Ovary (tissue), 10 donors: ENCODE measurements at regions of chr2 and their contacts with region 1.

Region 1: DNA sequence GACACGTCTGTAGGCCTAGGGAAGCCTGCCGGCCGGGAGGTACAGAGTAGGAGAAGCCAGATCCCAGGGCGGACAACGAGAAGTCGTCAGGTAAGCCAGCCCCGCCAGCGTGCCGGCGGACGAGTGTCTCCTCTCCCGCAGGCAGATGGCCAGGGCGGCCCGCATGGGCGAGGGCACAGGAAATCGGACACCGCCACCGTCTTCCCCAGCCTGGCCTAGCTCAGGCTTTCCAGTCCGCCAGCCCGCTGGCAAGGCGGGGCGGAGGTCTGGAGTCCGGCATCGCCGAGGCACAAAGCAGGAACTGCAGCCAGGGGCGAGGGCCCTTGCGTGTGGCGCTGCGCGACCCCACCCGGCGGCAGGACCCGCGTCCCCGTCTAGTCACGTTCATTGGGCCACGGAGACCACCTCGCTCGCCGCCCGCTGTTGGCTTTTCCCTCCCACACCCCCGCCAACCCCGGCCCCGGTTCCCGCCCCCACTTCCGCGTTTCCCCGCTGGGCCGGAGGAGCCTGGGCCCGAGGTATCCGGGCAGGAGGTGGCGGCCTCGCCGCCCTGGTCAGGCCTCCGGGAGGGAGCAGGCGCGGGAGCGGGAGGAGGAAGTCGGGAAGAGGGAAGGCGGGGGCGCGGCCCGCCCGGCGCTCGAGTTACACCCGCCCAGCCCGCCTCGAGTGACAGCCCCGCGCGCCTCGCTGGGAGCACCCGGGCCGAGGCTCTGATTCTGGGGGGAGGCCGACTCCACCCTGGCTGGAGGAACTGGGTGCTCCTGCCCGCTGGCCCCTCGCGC is at the start of gene GPD2:
- DNase-seq: peak; percentile 91 to 95 (median 92)
- H3K4me3 ChIP-seq: peak within 1 kb of the TSS; percentile 84
- H3K27ac ChIP-seq: peak within 1 kb of the TSS; percentile 93 to 98
- H3K4me1 ChIP-seq: peaks cover 7% of the 10 kb centered on the region
- H3K27me3 ChIP-seq: no peaks in the 10 kb centered on the region
- CTCF ChIP-seq: peak in 1 of 3 donors; percentile 16
- EP300 ChIP-seq: no peak
- POLR2A ChIP-seq: peak; percentile 74
- total RNA-seq, gene GPD2: 22.2 to 61.7 (median 27.8) TPM

Region 2: DNA sequence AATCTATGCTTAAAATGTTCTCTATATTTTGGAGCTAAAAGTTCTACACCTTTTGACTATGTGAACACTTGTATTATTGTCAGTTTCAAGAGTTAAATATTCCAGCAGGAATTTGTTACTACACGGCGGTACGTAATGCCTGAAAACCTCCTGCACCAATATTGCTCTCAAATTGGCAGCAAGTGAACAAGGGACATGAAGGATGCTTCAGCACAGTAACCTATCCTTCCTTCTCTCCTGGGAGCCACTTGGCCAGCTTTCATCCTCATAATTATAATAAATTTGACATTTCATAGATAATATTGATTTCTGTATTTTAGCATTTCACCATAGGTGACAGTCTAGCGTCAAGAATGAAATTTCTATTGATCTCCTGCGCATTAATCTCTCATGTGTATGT is 301.0 kb before region 1 on chr2:
- intact Hi-C with region 1: no loop called
- DNase-seq: no peak
- H3K4me3 ChIP-seq: no peak overlapping the region
- H3K27ac ChIP-seq: no peak overlapping the region
- H3K4me1 ChIP-seq: no peaks in the 10 kb centered on the region
- H3K27me3 ChIP-seq: no peaks in the 10 kb centered on the region
- CTCF ChIP-seq: no peak
- EP300 ChIP-seq: no peak
- POLR2A ChIP-seq: no peak

Region 3: DNA sequence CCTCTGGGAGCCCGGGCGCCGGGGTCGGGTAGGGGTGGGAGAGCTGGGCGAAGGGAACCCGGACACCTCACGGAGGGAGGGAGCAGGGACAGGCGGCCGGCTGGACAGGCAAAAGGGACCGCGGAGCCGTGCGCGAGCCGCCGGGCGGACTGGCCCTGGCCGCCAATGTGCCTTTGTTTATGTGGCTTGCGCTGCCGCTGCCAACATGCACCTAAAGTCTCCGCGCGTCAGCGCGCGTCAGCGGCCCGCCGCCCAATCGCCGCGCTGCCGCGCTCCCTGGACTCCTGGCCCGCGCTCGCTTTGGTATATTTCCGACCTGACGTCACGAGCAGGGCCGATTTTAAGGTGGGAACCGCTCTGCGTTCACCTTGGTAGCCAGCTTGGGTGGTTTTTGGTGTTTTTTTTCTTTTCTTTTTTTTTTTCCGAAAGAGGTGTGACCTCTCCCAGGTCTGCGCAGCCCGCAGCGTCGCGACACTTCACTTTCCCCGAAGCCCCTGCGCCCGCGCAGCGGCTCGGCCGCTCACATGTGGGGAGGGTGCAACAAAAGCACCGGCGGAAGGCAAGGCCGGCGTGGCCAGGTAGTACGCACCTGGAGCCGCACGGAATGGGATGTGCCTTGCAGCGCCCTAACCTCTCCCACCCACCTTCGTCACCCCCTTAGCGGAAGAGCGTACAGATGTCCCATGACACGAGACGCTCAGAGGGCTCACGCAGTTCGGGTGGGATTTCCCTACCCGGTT is 103.2 kb before region 1 on chr2 and contains the start of gene NR4A2:
- intact Hi-C with region 1: loop called in 3 of 4 experiments (anchors 5 to 10 kb)
- DNase-seq: peak; percentile 87 to 95 (median 94)
- H3K4me3 ChIP-seq: peak within 1 kb of the TSS; percentile 76
- H3K27ac ChIP-seq: peak within 1 kb of the TSS; percentile 98 to 100
- H3K4me1 ChIP-seq: peaks cover 7% of the 10 kb centered on the region
- H3K27me3 ChIP-seq: no peaks in the 10 kb centered on the region
- CTCF ChIP-seq: no peak
- EP300 ChIP-seq: peak; percentile 14
- POLR2A ChIP-seq: peak; percentile 90
- total RNA-seq, gene NR4A2: 12.2 to 259 (median 45.9) TPM

Region 4: DNA sequence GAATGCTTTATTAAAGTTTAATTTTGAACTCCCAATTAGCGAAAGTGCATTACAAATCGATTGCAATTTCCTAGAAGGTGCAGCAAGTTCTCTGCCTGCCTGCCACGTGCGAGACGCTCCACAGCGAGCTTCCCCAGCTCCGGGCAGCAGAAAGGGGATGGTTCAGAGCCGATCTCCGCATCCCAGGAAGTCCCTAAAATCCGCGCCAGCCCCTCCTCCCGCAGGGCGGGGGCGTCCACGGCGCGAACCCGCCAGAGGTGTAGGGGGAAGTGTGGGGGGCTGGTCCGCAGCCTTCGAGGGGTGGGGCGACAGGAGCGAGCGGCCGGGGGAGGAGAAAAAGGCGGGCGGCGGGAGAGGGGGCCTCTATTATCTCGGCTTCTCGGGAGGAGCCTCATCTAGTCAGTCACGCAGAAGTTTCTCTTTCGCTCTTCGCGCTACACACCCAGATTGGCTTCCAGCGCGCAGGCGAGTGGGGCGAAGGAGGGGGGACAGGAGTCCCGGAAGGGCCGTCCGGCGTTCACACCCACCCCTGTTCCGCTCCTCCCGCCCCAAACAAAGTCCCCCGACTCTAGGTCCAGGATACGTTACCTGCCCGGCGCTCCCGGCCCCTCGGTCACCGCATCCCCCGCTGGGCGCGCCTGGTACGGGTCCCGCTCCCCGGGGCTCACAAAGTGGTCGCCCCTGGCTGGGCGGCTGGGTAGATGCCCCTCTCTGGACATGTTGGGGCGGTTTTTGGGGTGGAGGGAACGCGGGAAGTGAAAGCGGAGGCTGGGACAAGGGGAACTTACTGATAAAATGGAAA is 94.3 kb before region 1 on chr2:
- intact Hi-C with region 1: loop called in 3 of 4 experiments (anchors 5 to 10 kb)
- DNase-seq: peak; percentile 96 to 97 (median 97)
- H3K4me3 ChIP-seq: peak overlapping the region; percentile 79
- H3K27ac ChIP-seq: peak overlapping the region; percentile 99 to 100
- H3K4me1 ChIP-seq: no peaks in the 10 kb centered on the region
- H3K27me3 ChIP-seq: no peaks in the 10 kb centered on the region
- CTCF ChIP-seq: peak in 2 of 3 donors; percentile 5 to 14
- EP300 ChIP-seq: no peak
- POLR2A ChIP-seq: peak; percentile 79

Region 5: GRCh38 chr2:156400706-156401678 is 34.9 kb before region 1 on chr2:
- intact Hi-C with region 1: loop called in 2 of 4 experiments (anchors 5 kb)
- DNase-seq: peak; percentile 70 to 85 (median 83)
- H3K4me3 ChIP-seq: peak overlapping the region; percentile 53
- H3K27ac ChIP-seq: peak overlapping the region; percentile 73 to 96
- H3K4me1 ChIP-seq: peaks cover 4% of the 10 kb centered on the region
- H3K27me3 ChIP-seq: no peaks in the 10 kb centered on the region
- CTCF ChIP-seq: peak in 1 of 3 donors; percentile 23
- EP300 ChIP-seq: no peak
- POLR2A ChIP-seq: no peak